PC-9 (cell line): ENCODE measurements at regions of chr19 and their contacts with region 1.

Region 1: GRCh38 chr19:50329146-50329925 is at the start of gene KCNC3:
- DNase-seq: peak; percentile 86 to 95
- H3K4me3 ChIP-seq: no peak within 1 kb of the TSS
- H3K27ac ChIP-seq: no peak within 1 kb of the TSS
- H3K4me1 ChIP-seq: peaks cover 22% of the 10 kb centered on the region; the same call in 1 of the 2 replicates
- H3K27me3 ChIP-seq: no peaks in the 10 kb centered on the region; the same call in 1 of the 2 replicates
- CTCF ChIP-seq: no peak
- total RNA-seq, gene KCNC3: 9.0 and 9.4 TPM in 2 replicates

Region 2: DNA sequence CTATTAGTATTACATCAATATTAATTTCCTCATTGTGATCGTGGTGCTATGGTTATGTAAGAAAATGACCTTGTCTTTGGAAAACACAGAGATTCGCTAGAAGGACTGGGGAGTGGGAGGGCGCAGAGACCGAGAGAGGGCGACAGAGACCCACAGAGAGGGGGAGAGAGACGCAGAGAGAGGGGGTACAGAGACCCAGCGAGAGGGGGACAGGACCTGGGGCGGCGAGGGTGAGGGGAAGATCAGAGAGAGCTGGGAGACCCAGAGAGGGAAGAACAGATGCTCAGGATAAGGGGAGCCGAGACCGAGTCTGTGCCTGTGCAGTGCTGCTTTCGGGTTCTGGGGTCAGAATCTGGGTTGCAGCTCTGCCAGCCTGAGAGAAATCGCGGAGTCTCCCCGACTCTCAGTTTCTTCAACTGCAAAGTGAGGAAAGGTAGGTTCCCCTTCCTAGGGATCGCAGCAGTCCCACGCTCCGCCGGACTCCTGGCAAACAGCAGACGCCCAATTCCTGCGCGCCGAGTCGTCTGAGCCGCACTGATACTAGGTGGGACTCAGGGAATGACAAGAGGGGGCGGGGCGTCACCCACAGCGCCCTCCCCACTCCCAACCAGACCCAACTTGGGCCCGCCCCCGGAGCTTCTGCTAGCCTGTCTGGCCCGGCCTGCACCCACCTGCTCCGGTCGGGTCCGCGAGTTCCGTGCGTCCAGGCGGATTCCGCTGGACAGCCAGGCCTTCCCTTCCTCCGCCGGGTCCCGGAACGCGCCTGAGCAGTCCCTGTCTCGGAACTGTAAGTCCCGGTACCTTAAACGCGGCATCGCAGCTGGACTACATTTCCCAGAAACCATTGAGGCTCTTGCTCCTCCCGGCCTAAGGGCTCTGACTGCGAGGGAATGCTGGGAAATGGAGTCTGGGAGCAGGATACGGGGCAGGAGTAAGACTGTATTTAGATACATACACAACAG is 181.6 kb before region 1 on chr19:
- CTCF ChIA-PET with region 1: no interaction called
- POLR2A ChIA-PET with region 1: interaction called, 23 read pairs
- intact Hi-C with region 1: no loop called
- DNase-seq: peak; percentile 86
- H3K4me3 ChIP-seq: peak overlapping the region; percentile 66
- H3K27ac ChIP-seq: 0 out of 2 replicates have a peak overlapping the region, but pooled peaks have one; percentile 21
- H3K4me1 ChIP-seq: no peaks in the 10 kb centered on the region
- H3K27me3 ChIP-seq: peaks cover 20% of the 10 kb centered on the region; the same call in 1 of the 2 replicates
- CTCF ChIP-seq: peak; percentile 89

Region 3: DNA sequence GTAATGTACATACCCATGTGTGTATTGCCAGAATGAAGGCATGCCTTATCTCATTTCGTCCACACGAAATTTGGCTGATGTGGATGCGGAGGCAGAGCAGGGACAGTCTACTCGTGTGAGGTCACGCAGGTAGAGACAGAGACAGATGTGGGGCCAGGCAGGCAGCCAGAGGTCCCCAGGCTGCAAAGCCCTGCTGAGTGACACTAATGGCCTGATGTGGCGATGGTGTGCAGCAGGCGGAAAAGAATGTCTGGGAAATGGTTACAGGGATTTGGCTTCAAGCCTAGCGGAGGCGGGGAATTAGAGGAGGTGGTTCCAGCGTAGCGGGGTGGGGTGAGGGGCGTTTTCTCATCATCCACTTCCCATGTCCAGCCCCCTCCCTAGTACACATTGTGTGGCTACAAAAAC is 162.0 kb before region 1 on chr19:
- CTCF ChIA-PET with region 1: no interaction called
- POLR2A ChIA-PET with region 1: no interaction called
- intact Hi-C with region 1: loop called (anchors 2 kb)
- DNase-seq: peak; percentile 73 to 82
- H3K4me3 ChIP-seq: no peak overlapping the region
- H3K27ac ChIP-seq: peak overlapping the region; percentile 57
- H3K4me1 ChIP-seq: peaks cover 65% of the 10 kb centered on the region
- H3K27me3 ChIP-seq: no peaks in the 10 kb centered on the region
- CTCF ChIP-seq: no peak

Region 4: DNA sequence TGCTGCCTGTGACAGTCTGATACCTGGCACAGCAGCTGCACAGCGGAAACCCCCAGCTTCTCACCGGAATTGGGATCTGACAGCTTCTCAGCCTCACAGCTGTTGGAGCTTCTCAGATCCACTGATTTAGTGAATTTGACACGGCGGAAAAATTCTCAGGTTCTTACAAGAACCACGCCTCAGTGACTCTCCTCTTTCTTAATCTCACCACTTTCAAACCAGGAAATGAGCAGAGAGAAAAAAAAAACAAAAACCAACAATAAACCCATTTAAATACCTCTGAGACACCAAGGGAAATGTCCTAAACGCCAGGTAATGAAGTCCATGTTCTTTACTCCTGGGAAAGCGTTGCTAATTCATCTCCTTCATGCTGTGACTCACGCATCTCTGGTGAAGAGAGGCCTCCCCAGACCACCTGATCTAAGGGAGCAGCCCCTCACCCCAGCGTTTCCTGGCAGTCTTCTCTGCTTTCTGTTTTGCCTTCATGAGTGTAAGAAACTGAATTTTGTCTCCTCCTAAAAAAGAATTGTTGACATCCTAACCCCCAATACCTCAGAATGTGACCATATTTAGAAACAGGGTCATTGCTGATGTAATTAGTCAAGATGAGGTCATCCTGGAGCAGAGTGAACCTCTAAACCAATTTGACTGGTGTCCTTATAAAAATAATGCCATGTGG is 150.3 kb before region 1 on chr19:
- CTCF ChIA-PET with region 1: interaction called, 12 read pairs
- POLR2A ChIA-PET with region 1: interaction called, 6 read pairs
- intact Hi-C with region 1: no loop called
- DNase-seq: peak; percentile 46 to 93
- H3K4me3 ChIP-seq: peak overlapping the region; percentile 45
- H3K27ac ChIP-seq: peak overlapping the region; percentile 94
- H3K4me1 ChIP-seq: peaks cover 35% of the 10 kb centered on the region
- H3K27me3 ChIP-seq: no peaks in the 10 kb centered on the region
- CTCF ChIP-seq: no peak

Region 5: DNA sequence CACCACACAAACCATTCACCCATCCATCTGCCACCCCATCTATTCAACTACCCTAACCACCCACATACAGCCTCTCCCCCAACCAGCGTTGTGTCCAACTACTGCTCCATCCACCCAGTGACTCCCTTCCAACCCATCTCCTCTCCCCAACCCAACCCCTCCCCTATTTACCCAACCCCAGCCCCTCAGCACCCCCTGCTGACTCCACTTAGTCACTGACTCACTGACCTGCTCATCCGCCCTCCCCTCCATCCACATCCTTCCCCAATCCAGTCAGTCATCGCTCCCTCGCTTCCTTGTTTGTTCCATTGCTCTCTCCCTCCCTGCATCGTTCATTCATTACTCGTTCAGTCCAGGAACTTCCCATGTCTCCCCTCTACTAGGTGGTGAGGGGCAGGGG is 39.3 kb before region 1 on chr19:
- CTCF ChIA-PET with region 1: interaction called, 10 read pairs
- POLR2A ChIA-PET with region 1: no interaction called
- intact Hi-C with region 1: no loop called
- DNase-seq: no peak
- H3K4me3 ChIP-seq: no peak overlapping the region
- H3K27ac ChIP-seq: no peak overlapping the region
- H3K4me1 ChIP-seq: no peaks in the 10 kb centered on the region
- H3K27me3 ChIP-seq: no peaks in the 10 kb centered on the region
- CTCF ChIP-seq: no peak

Region 6: GRCh38 chr19:50311723-50312635 is 17.4 kb before region 1 on chr19:
- CTCF ChIA-PET with region 1: no interaction called
- POLR2A ChIA-PET with region 1: interaction called, 19 read pairs
- intact Hi-C with region 1: no loop called
- DNase-seq: no peak
- H3K4me3 ChIP-seq: no peak overlapping the region
- H3K27ac ChIP-seq: no peak overlapping the region
- H3K4me1 ChIP-seq: 0 out of 2 replicates have a peak, but pooled peaks cover 3% of the 10 kb centered on the region
- H3K27me3 ChIP-seq: no peaks in the 10 kb centered on the region
- CTCF ChIP-seq: no peak